A549 (cell line): ENCODE measurements at regions of chr13 and their contacts with region 1.

Region 1: GRCh38 chr13:73058736-73059459 is at the start of gene KLF5:
- DNase-seq: peak; percentile 67 to 97
- ATAC-seq: peak; percentile 89 to 95
- H3K4me3 ChIP-seq: peak within 1 kb of the TSS; percentile 90
- H3K27ac ChIP-seq: peak within 1 kb of the TSS; percentile 93 to 99
- H3K4me1 ChIP-seq: peaks cover 35% of the 10 kb centered on the region
- CTCF ChIP-seq: no peak
- EP300 ChIP-seq: no peak
- POLR2A ChIP-seq: peak; percentile 96
- RAD21 ChIP-seq: 0 out of 5 replicates have a peak, but pooled peaks of 1 of the 2 experiments have one; percentile 2
- polyA plus RNA-seq, gene KLF5: 83.5 and 101 TPM in 2 replicates

Region 2: GRCh38 chr13:72820156-72820897 is 238.6 kb before region 1 on chr13:
- CTCF ChIA-PET with region 1: no interaction called
- POLR2A ChIA-PET with region 1: no interaction called
- DNase-seq: no peak
- ATAC-seq: no peak
- H3K4me3 ChIP-seq: no peak overlapping the region
- H3K27ac ChIP-seq: no peak overlapping the region
- H3K4me1 ChIP-seq: peaks cover 9% of the 10 kb centered on the region; the same call in 1 of the 3 replicates
- CTCF ChIP-seq: no peak
- EP300 ChIP-seq: no peak
- POLR2A ChIP-seq: no peak
- RAD21 ChIP-seq: no peak

Region 3: DNA sequence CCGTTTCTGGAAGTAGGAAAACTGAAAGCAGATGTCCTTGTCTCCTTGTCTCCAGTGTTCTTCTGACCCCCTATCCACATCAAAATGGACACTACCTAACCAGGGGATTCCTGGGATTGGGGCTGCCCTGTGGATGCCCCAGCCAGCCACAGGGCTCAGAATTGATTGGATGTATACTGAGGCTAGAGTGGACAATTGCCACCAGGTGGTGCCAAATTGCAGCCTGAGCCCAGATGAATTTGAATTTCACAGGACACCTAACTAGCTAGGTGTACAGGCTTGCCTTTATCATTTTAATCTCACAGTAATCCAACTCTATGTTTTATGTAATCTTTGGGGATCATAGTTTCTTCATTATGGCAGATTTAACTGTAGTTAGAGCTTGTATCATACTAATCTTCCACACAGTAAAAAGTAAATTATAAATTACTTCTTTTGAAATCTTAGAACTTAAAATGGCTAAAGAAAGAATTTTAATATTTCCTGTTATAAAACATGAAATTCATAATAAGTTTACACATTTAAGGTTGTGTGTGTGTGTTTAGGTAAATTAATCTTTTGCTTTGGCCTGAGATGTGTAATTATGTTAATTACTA is 219.0 kb before region 1 on chr13:
- CTCF ChIA-PET with region 1: interaction called, 11 read pairs
- POLR2A ChIA-PET with region 1: interaction called, 3 read pairs
- DNase-seq: peak; percentile 31 to 60
- ATAC-seq: peak; percentile 92 to 96
- H3K4me3 ChIP-seq: no peak overlapping the region
- H3K27ac ChIP-seq: no peak overlapping the region
- H3K4me1 ChIP-seq: no peaks in the 10 kb centered on the region
- CTCF ChIP-seq: peak; percentile 67
- EP300 ChIP-seq: no peak
- POLR2A ChIP-seq: no peak
- RAD21 ChIP-seq: peak; percentile 80 to 82

Region 4: DNA sequence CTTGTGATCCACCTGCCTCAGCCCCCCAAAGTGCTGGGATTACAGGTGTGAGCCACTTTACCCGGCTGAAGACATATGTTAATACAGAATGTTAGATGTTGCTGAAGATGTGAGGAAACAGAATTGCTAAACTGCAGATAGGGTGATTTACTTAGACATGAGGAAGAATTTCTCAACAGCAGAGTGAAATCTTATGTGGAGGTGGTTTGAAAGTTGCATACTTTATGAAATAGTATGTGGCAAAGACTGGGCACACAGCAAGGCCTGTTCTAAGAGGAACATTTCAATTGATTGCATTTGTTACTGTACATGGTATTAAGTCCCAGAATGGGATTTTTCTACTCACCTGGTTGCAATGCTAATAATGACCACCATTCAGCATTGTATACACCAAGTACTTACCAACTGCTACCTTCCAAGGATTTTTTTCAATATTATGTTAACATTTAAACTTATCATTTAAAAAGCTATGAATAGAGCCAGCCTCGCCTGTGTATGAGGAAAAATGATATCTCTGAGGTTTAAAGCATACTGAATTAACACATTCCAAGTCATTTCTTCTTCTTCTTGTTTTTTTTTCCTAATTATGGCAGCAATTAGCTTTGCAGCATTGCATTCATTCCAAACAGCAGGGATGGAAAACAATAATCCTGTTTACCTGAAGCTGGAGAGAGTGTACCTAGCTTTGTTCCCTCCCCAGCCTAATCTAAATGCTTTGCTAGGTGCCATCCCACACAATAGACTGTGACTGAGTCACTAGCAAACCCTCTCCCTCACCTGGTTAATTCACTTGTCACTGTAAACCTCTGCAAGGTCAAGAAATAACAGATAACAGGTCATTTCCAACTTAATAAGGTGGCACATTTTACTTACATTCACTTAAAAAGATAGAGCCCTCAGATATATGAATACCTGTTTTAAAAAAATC is 19.5 kb before region 1 on chr13:
- CTCF ChIA-PET with region 1: no interaction called
- POLR2A ChIA-PET with region 1: interaction called, 14 read pairs
- DNase-seq: no peak
- ATAC-seq: 0 out of 6 replicates have a peak, but pooled peaks of 1 of the 2 experiments have one; percentile 17
- H3K4me3 ChIP-seq: no peak overlapping the region; the same call in 2 of the 3 replicates
- H3K27ac ChIP-seq: peak overlapping the region; percentile 77 to 93
- H3K4me1 ChIP-seq: peaks cover 38% of the 10 kb centered on the region
- CTCF ChIP-seq: no peak
- EP300 ChIP-seq: no peak
- POLR2A ChIP-seq: no peak
- RAD21 ChIP-seq: no peak

Region 5: DNA sequence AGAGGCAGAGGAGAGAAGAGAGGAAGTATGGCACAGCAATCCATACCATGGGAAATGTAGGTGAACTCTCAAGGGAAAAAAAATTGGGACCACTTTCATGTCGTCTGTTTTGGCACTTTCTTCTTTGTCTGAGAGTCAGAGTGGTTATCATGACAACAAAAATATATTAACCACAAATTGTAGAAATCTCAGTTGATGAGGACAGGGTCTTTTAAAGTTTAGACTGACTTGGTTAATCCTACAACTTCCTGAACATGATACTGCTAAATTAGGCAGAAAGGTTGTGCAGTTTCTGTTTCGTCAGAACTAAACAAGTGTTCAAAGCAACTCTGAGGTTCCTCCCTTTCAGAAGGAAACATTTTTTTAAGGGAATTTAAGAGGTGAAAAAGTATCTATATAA is 15.1 kb after region 1 on chr13:
- CTCF ChIA-PET with region 1: no interaction called
- POLR2A ChIA-PET with region 1: interaction called, 12 read pairs
- DNase-seq: no peak
- ATAC-seq: no peak
- H3K4me3 ChIP-seq: 0 out of 3 replicates have a peak overlapping the region, but pooled peaks have one; percentile 5
- H3K27ac ChIP-seq: peak overlapping the region; percentile 63 to 73
- H3K4me1 ChIP-seq: peaks cover 70% of the 10 kb centered on the region
- CTCF ChIP-seq: no peak
- EP300 ChIP-seq: no peak
- POLR2A ChIP-seq: no peak
- RAD21 ChIP-seq: no peak

Region 6: DNA sequence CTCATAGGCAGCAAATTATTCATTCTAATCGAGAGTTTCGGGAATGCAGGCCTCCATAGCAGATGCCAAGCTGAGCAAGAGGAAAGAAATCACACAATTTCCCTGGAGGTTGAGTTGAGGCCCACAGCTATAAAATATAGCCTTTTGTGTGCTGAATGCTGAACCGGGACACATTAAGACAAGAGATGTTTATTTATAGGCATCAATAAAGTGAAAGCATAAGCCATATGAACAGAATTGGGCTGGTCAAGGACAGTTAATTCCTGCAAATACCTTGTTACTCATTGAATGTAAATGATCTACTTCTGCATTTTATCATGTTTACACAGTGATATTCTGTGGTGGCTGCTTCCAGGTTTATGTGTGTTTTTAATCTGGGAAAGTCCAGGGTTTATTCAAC is 613.6 kb after region 1 on chr13:
- CTCF ChIA-PET with region 1: no interaction called
- POLR2A ChIA-PET with region 1: no interaction called
- DNase-seq: peak in 1 of 2 experiments; percentile 46
- ATAC-seq: peak in 1 of 2 experiments; percentile 67; a peak in 3 of 6 replicates
- H3K4me3 ChIP-seq: no peak overlapping the region
- H3K27ac ChIP-seq: peak overlapping the region in 1 of 2 experiments; percentile 37; a peak in 2 of 6 replicates
- H3K4me1 ChIP-seq: peaks cover 33% of the 10 kb centered on the region
- CTCF ChIP-seq: no peak
- EP300 ChIP-seq: no peak
- POLR2A ChIP-seq: no peak
- RAD21 ChIP-seq: no peak